Head of caudate nucleus (tissue), 42 donors: ENCODE measurements at regions of chr3 and their contacts with region 1.

Region 1: DNA sequence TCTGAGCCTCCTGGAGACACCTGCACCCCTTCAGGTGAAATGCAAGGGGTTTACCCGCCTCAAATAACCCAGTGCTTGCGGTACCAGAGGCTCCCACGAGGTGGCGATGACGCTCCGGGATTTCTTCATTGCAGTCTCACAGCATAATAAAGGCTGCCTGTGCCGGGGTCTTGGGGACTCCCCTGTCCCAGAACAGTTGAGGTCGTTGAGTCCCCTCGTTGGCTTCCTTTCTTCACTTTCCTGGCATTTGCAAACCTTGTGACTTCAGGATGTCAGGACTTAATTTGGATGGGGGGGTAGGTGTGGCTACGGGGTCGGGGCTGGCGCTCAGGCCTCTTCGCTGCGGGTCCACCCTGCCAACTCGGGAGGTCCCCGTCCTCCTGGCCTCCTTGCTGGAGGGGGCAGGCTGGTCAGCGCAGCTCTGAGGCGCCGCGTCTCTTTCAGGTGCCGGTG is 1.3 kb downstream of the GNAT1 start:
- DNase-seq: peak in 41 of 42 donors; percentile 47 to 90 (median 78)

Region 2: GRCh38 chr3:49872801-49873281 is 319.9 kb before region 1 on chr3:
- intact Hi-C with region 1: no loop called
- DNase-seq: peak; percentile 21 to 88 (median 56)

Region 3: GRCh38 chr3:50121416-50122032 is 71.2 kb before region 1 on chr3:
- intact Hi-C with region 1: loop called (anchors 2 kb)
- DNase-seq: peak; percentile 47 to 91 (median 80)

Region 4: GRCh38 chr3:50227390-50228183 is 34.9 kb after region 1 on chr3:
- intact Hi-C with region 1: loop called (anchors 2 kb)
- DNase-seq: peak; percentile 68 to 96 (median 90)